MCF 10A (cell line): ENCODE measurements at regions of chr5 and their contacts with region 1.

Region 1: GRCh38 chr5:179763215-179763945 is 30.4 kb upstream of the LTC4S start:
- DNase-seq: peak; percentile 88
- H3K4me3 Mint-ChIP-seq: peak overlapping the region; percentile 33
- H3K27ac Mint-ChIP-seq: peak overlapping the region; percentile 75
- H3K4me1 Mint-ChIP-seq: peaks cover 56% of the 10 kb centered on the region
- H3K27me3 Mint-ChIP-seq: no peaks in the 10 kb centered on the region
- CTCF ChIP-seq: peak; percentile 83

Region 2: DNA sequence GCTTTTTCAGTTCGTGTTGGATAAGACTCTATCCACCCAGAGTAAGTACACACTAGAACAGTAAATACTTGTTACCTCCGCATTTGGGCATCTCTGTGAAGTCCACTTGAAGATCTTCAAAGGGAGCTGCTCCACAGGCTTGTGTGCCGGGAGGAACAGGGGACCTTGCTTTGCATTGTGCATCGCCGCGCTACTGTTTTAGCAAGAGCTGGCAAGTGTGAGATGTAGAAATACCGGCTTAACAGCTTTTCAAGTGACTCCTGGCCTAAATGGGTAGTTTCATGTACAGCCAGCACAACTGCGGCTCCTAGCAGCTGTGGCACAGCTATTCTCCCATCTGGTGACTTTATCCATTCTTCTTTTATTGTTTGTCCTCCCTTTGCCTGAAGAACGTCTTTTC is 711.6 kb before region 1 on chr5:
- CTCF ChIA-PET with region 1: no interaction called
- POLR2A ChIA-PET with region 1: no interaction called
- intact Hi-C with region 1: no loop called
- DNase-seq: no peak
- H3K4me3 Mint-ChIP-seq: no peak overlapping the region
- H3K27ac Mint-ChIP-seq: no peak overlapping the region
- H3K4me1 Mint-ChIP-seq: no peaks in the 10 kb centered on the region
- H3K27me3 Mint-ChIP-seq: no peaks in the 10 kb centered on the region
- CTCF ChIP-seq: no peak

Region 3: GRCh38 chr5:179738742-179739141 is 24.6 kb before region 1 on chr5:
- CTCF ChIA-PET with region 1: interaction called, 19 read pairs
- POLR2A ChIA-PET with region 1: interaction called, 69 read pairs
- intact Hi-C with region 1: no loop called
- DNase-seq: no peak
- H3K4me3 Mint-ChIP-seq: no peak overlapping the region
- H3K27ac Mint-ChIP-seq: peak overlapping the region; percentile 3
- H3K4me1 Mint-ChIP-seq: peaks cover 39% of the 10 kb centered on the region
- H3K27me3 Mint-ChIP-seq: no peaks in the 10 kb centered on the region
- CTCF ChIP-seq: no peak

Region 4: DNA sequence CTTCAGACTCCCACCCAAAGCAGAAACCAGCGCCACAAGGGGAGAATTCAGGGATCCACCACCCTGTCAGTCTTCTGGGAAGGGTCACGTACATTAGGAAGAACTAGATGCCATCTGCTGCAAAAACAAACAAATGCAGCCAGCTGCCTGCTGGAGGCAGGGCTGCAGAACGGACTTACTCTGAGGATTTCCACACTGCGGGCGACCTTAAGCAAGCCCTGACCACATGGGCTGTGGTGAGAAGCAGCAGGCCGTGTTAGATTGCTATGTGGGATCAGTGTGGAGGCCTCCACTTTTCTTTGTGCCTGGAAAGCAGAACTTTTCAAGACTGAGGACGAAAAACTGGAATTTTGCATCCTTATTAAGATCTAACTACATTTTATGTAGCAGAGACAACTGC is 17.0 kb after region 1 on chr5:
- CTCF ChIA-PET with region 1: interaction called, 19 read pairs
- POLR2A ChIA-PET with region 1: interaction called, 5 read pairs
- intact Hi-C with region 1: no loop called
- DNase-seq: no peak
- H3K4me3 Mint-ChIP-seq: no peak overlapping the region
- H3K27ac Mint-ChIP-seq: no peak overlapping the region
- H3K4me1 Mint-ChIP-seq: no peaks in the 10 kb centered on the region
- H3K27me3 Mint-ChIP-seq: no peaks in the 10 kb centered on the region
- CTCF ChIP-seq: no peak

Region 5: DNA sequence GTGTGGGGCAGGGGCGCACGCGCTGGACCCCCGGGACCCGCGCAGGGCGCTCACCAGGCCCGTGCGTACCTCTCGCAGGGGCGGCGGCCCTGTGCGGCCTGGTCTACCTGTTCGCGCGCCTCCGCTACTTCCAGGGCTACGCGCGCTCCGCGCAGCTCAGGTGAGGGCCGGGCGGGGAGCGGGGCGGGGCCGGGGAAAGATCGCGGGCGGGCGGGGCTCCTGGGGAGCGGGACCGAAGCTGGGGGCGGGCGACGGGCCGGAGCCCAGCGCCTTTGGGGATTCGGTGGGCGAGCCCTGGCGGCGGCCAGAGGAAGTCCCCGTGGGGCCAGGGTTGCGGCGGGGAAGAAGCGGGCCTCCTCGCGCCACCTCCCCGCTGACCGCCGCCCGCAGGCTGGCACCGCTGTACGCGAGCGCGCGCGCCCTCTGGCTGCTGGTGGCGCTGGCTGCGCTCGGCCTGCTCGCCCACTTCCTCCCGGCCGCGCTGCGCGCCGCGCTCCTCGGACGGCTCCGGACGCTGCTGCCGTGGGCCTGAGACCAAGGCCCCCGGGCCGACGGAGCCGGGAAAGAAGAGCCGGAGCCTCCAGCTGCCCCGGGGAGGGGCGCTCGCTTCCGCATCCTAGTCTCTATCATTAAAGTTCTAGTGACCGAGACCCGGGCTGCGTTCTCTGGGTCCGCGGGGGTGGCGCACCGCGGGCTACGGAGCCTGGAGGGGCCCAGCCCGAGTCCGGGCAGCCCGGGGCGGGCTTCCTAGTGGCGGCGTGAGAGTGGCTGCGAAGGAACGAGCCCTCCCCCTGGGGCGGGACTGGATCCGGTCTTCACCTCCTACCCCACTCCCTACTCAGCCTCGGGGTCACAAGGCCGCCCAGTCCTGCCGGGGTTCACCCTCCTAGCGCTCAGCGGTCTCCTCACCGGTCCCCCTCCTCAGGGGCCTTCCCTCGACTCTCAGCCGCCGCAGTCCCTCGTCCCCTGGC is 32.8 kb after region 1 on chr5:
- CTCF ChIA-PET with region 1: interaction called, 42 read pairs
- POLR2A ChIA-PET with region 1: interaction called, 37 read pairs
- intact Hi-C with region 1: loop called (anchors 1 kb)
- DNase-seq: peak; percentile 88
- H3K4me3 Mint-ChIP-seq: peak overlapping the region; percentile 71
- H3K27ac Mint-ChIP-seq: peak overlapping the region; percentile 26
- H3K4me1 Mint-ChIP-seq: peaks cover 8% of the 10 kb centered on the region
- H3K27me3 Mint-ChIP-seq: no peaks in the 10 kb centered on the region
- CTCF ChIP-seq: peak; percentile 86

Region 6: GRCh38 chr5:179821581-179822432 is 58.4 kb after region 1 on chr5:
- CTCF ChIA-PET with region 1: interaction called, 5 read pairs
- POLR2A ChIA-PET with region 1: interaction called, 22 read pairs
- intact Hi-C with region 1: loop called (anchors 1 kb)
- DNase-seq: peak; percentile 99
- H3K4me3 Mint-ChIP-seq: peak overlapping the region; percentile 94
- H3K27ac Mint-ChIP-seq: peak overlapping the region; percentile 95
- H3K4me1 Mint-ChIP-seq: peaks cover 48% of the 10 kb centered on the region
- H3K27me3 Mint-ChIP-seq: no peaks in the 10 kb centered on the region
- CTCF ChIP-seq: no peak

Region 7: GRCh38 chr5:179907570-179908324 is 144.4 kb after region 1 on chr5 and contains the start of gene TBC1D9B:
- CTCF ChIA-PET with region 1: interaction called, 6 read pairs
- POLR2A ChIA-PET with region 1: no interaction called
- intact Hi-C with region 1: loop called (anchors 2 kb)
- DNase-seq: peak; percentile 73
- H3K4me3 Mint-ChIP-seq: peak within 1 kb of the TSS; percentile 98
- H3K27ac Mint-ChIP-seq: peak within 1 kb of the TSS; percentile 82
- H3K4me1 Mint-ChIP-seq: peaks cover 7% of the 10 kb centered on the region
- H3K27me3 Mint-ChIP-seq: no peaks in the 10 kb centered on the region
- CTCF ChIP-seq: peak; percentile 34
- total RNA-seq, gene TBC1D9B: 162 and 166 TPM in 2 replicates